K562 (cell line): ENCODE measurements at regions of chr6 and their contacts with region 1.

Region 1: GRCh38 chr6:150395398-150396009 is 26.7 kb downstream of the IYD start:
- DNase-seq: peak; percentile 50 to 73 (median 62)
- ATAC-seq: peak; percentile 99
- H3K4me3 ChIP-seq: no peak overlapping the region
- H3K27ac ChIP-seq: no peak overlapping the region
- H3K4me1 ChIP-seq: no peaks in the 10 kb centered on the region
- H3K27me3 ChIP-seq: peaks cover 24 to 46% of the 10 kb centered on the region in 2 experiments; a peak in 4 of 5 replicates
- CTCF ChIP-seq: peak; percentile 83 to 88 (median 84)
- EP300 ChIP-seq: no peak
- POLR2A ChIP-seq: no peak
- RAD21 ChIP-seq: peak; percentile 92

Region 2: GRCh38 chr6:148760568-148761526 is 1634.7 kb before region 1 on chr6:
- CTCF ChIA-PET with region 1: no interaction called
- POLR2A ChIA-PET with region 1: no interaction called
- in situ Hi-C with region 1: no loop called
- intact Hi-C with region 1: no loop called
- DNase-seq: no peak
- ATAC-seq: no peak
- H3K4me3 ChIP-seq: no peak overlapping the region
- H3K27ac ChIP-seq: no peak overlapping the region
- H3K4me1 ChIP-seq: no peaks in the 10 kb centered on the region
- H3K27me3 ChIP-seq: peaks cover 16 to 22% of the 10 kb centered on the region in 2 experiments; a peak in 3 of 5 replicates
- CTCF ChIP-seq: no peak
- EP300 ChIP-seq: no peak
- POLR2A ChIP-seq: no peak
- RAD21 ChIP-seq: no peak

Region 3: DNA sequence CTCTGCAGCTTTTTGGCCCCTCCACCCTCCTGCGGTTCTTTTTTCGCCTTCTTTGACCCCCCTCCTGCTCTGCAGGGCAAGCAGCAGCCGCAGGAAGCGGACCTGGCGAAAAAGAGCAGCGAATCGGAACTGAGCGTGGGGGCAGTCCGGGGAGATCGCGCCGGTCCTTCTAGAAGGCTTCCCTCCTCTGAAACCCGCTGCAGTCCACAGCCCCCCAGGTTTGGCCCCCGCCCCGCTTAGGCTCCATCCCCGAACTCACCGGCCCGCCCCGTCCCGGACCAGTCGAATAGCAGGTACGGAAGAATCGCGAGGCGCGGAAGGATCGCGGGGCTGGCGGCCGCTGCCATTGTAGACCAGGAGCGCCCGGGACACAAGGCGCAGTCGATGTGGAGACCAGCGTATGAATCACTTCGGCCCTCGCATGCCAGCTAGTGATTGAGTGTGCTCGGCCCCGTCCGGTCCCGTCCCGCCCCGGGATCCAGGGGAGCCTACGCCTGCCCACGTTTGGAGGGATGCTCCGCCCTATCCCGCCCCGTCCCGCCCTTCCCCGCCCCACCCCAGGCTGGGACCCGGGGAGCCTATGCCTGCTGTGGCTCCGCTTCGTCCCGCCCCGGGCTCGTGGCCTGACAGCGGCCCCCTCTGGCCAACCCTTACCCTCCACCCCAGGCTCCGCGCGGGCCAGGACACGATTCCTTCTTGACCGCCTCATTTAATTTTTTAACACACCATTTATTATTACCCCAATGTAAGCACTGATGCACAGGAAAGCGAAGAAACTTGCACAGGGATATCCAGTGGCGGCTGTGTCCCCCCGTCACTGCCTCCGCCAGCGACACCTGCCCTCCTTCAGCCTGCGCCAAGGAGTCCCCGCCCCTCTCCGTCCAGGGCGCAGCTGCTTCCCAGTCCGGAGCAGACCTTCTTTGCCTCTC is 326.5 kb before region 1 on chr6 and contains the start of gene ULBP3:
- CTCF ChIA-PET with region 1: interaction called, 22 read pairs
- POLR2A ChIA-PET with region 1: interaction called, 5 read pairs
- in situ Hi-C with region 1: loop called (anchors 5 kb)
- intact Hi-C with region 1: loop called (anchors 2 kb)
- DNase-seq: peak; percentile 64 to 86 (median 84)
- ATAC-seq: peak; percentile 88
- H3K4me3 ChIP-seq: peak within 1 kb of the TSS; percentile 28; the same call in 1 of the 2 replicates
- H3K27ac ChIP-seq: no peak within 1 kb of the TSS
- H3K4me1 ChIP-seq: peaks cover 5 to 24% of the 10 kb centered on the region in 2 experiments; a peak in 3 of 5 replicates
- H3K27me3 ChIP-seq: peaks cover 18 to 52% of the 10 kb centered on the region in 2 experiments
- CTCF ChIP-seq: peak; percentile 45 to 70 (median 50); a peak in 5 of 6 replicates
- EP300 ChIP-seq: no peak
- POLR2A ChIP-seq: no peak
- RAD21 ChIP-seq: peak in 1 of 2 experiments; percentile 18; a peak in 1 of 4 replicates
- polyA plus RNA-seq, gene ULBP3: not detected

Region 4: GRCh38 chr6:150079604-150080003 is 315.9 kb before region 1 on chr6:
- CTCF ChIA-PET with region 1: interaction called, 22 read pairs
- POLR2A ChIA-PET with region 1: interaction called, 3 read pairs
- in situ Hi-C with region 1: loop called (anchors 5 kb)
- intact Hi-C with region 1: loop called (anchors 1 kb)
- DNase-seq: no peak
- ATAC-seq: peak; percentile 52
- H3K4me3 ChIP-seq: no peak overlapping the region
- H3K27ac ChIP-seq: no peak overlapping the region
- H3K4me1 ChIP-seq: no peaks in the 10 kb centered on the region; a peak in 2 of 5 replicates
- H3K27me3 ChIP-seq: peaks cover 18 to 20% of the 10 kb centered on the region in 2 experiments
- CTCF ChIP-seq: no peak
- EP300 ChIP-seq: no peak
- POLR2A ChIP-seq: no peak
- RAD21 ChIP-seq: no peak

Region 5: GRCh38 chr6:150184850-150185731 is 210.4 kb before region 1 on chr6:
- CTCF ChIA-PET with region 1: no interaction called
- POLR2A ChIA-PET with region 1: no interaction called
- in situ Hi-C with region 1: no loop called
- intact Hi-C with region 1: no loop called
- DNase-seq: no peak
- ATAC-seq: peak; percentile 23
- H3K4me3 ChIP-seq: no peak overlapping the region
- H3K27ac ChIP-seq: no peak overlapping the region
- H3K4me1 ChIP-seq: peaks cover 15 to 32% of the 10 kb centered on the region in 2 experiments; a peak in 4 of 5 replicates
- H3K27me3 ChIP-seq: no peaks in the 10 kb centered on the region
- CTCF ChIP-seq: no peak
- EP300 ChIP-seq: no peak
- POLR2A ChIP-seq: no peak
- RAD21 ChIP-seq: no peak

Region 6: DNA sequence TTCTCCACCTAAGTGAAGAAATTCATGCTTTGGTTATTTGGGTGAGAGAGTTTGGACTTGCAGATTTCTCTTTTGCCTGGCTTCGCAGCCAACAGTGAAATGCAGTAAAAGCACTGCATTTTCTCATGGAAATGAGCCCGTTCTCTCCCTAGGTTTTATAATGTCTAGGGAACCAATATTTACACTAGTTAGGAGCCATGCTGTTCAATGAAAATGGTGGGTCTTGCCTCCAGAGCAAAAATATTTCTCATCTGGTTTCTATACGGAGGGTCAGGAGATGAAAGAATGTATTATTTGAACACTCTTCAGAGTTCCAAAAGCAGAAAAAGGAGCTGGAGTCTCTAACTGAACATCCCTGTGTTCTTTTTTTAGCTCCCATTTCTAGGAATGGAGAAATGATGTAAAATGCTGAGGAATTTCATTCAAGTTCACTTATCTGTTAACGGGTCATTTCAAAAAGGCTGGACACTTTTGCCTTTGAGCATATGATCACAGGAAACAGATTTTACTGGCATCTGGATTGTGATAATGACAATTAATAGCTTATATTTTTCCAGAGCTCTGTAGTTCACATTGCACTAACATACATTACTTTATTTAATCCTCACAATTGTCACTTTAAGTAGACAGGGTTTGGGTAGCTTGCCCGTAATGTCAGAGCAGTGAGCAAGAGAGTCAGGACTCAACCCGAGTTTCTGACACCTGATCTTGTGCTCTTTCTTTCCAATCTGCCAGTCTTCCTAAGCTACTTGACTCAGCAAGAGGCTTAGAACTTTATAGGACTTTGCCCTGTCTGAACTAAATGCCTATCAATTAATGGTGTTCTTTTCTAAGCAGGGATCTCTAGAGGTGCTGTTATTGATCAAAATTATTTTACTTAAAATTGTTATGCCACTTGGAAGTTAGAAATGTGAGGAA is 174.6 kb before region 1 on chr6:
- CTCF ChIA-PET with region 1: no interaction called
- POLR2A ChIA-PET with region 1: no interaction called
- in situ Hi-C with region 1: no loop called
- intact Hi-C with region 1: no loop called
- DNase-seq: no peak
- ATAC-seq: peak; percentile 64
- H3K4me3 ChIP-seq: no peak overlapping the region
- H3K27ac ChIP-seq: no peak overlapping the region; the same call in 2 of the 3 replicates
- H3K4me1 ChIP-seq: peaks cover 0 to 15% of the 10 kb centered on the region in 2 experiments; a peak in 3 of 5 replicates
- H3K27me3 ChIP-seq: no peaks in the 10 kb centered on the region
- CTCF ChIP-seq: no peak
- EP300 ChIP-seq: peak; percentile 59; the same call in 1 of the 2 replicates
- POLR2A ChIP-seq: no peak
- RAD21 ChIP-seq: 0 out of 4 replicates have a peak, but pooled peaks of 1 of the 2 experiments have one; percentile 4

Region 7: DNA sequence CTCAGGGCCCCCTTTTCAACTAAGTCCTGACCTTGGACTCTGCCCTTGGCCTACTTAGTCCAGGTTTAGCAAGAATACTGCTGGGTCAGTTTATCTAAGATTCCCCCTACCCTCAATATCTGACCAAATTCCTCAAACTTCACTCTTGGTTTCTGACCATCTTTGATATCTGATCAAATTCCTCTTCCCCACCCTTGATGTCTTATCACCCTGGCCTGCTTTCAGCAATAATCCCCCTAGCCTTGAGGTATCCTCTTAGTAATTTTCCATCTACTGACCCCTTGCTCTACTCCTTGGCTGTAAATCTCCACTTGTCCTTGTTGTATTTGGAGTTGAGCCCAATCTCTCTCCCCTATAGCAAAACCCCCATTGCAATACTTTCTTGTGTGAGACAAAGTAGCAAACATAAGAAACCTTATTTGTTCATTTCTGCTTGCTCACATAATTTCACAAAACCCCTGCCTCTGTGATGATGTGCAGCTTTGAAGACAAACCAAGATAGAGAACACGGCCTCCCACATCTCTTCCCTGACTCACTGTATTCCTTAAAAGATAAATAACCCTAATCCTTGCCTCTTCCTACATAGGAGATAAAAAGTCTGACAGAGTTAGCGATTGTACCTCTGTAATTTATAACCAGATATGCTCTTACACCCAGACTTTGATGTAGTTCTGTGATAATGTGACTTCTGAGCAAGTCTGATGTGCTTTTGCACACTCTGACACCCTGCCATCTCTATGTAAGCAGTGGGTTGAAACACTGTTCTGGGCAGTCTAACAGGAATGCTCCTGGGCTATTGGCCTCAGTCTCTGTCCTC is 40.5 kb before region 1 on chr6:
- CTCF ChIA-PET with region 1: no interaction called
- POLR2A ChIA-PET with region 1: no interaction called
- in situ Hi-C with region 1: no loop called
- intact Hi-C with region 1: loop called (anchors 5 kb)
- DNase-seq: no peak
- ATAC-seq: no peak
- H3K4me3 ChIP-seq: no peak overlapping the region
- H3K27ac ChIP-seq: no peak overlapping the region
- H3K4me1 ChIP-seq: no peaks in the 10 kb centered on the region; a peak in 1 of 5 replicates
- H3K27me3 ChIP-seq: peaks cover 0 to 12% of the 10 kb centered on the region in 2 experiments; a peak in 2 of 5 replicates
- CTCF ChIP-seq: no peak
- EP300 ChIP-seq: no peak
- POLR2A ChIP-seq: no peak
- RAD21 ChIP-seq: no peak